CD8-positive, alpha-beta T cell (primary cell): ENCODE measurements at regions of chr2 and their contacts with region 1.

Region 1: GRCh38 chr2:203814661-203815540 is 52.7 kb upstream of the CTLA4 start:
- DNase-seq: peak; percentile 13 to 84 (median 50)
- ATAC-seq: peak; percentile 80
- H3K4me3 ChIP-seq: no peak overlapping the region
- H3K4me3 Mint-ChIP-seq: peak overlapping the region; percentile 79
- H3K27ac ChIP-seq: no peak overlapping the region
- H3K27ac Mint-ChIP-seq: no peak overlapping the region
- H3K4me1 ChIP-seq: peaks cover 23% of the 10 kb centered on the region
- H3K4me1 Mint-ChIP-seq: peaks cover 43% of the 10 kb centered on the region
- H3K27me3 ChIP-seq: no peaks in the 10 kb centered on the region
- H3K27me3 Mint-ChIP-seq: no peaks in the 10 kb centered on the region
- CTCF ChIP-seq: peak; percentile 79

Region 2: DNA sequence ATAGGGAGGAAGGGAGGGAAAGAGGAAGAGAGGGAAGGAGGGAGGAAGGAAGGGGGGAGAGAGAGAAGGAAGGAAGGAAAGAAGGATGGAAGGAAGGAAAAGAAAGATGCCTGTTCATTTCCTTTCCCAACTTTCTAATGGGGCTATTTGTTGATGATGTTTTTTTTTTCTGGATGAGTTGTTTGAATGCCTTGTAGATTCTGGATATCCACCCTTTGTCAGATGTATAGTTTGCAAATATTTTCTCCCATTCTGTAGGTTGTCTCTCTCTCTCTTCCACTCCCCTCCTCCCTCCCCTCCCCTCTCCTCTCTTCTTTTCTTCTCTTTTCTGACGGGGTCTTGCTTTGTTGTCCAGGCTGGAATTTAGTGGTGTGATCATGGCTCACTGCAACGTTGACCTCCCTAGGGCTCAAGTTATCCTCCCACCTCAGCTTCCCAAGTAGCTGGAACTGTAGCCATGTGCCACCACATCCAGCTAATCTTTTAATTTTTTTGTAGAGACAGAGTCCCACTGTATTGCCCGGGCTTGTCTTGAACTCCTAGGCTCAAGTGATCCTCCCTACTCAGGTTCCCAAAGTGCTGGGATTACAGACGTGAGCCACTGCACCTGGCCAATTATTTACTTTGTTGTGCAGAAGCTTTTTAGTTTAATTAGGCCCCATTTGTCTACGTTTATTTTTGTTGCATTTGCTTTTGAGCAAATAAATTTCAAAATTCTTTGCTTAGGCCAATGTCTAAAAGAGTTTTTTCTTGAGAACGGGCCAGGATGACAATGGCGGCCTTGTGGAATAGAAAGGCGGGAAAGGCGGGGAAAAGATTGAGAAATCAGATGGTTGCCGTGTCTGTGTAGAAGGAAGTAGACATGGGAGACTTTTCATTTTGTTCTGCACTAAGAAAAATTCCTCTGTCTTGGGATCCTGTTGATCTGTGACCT is 1237.4 kb before region 1 on chr2:
- CTCF ChIA-PET with region 1: no interaction called
- POLR2A ChIA-PET with region 1: no interaction called
- intact Hi-C with region 1: loop called in 1 of 2 experiments (anchors 5 kb)
- DNase-seq: no peak
- ATAC-seq: no peak
- H3K4me3 ChIP-seq: no peak overlapping the region
- H3K4me3 Mint-ChIP-seq: no peak overlapping the region
- H3K27ac ChIP-seq: no peak overlapping the region
- H3K27ac Mint-ChIP-seq: no peak overlapping the region
- H3K4me1 ChIP-seq: no peaks in the 10 kb centered on the region
- H3K4me1 Mint-ChIP-seq: no peaks in the 10 kb centered on the region
- H3K27me3 ChIP-seq: no peaks in the 10 kb centered on the region
- H3K27me3 Mint-ChIP-seq: no peaks in the 10 kb centered on the region
- CTCF ChIP-seq: no peak

Region 3: DNA sequence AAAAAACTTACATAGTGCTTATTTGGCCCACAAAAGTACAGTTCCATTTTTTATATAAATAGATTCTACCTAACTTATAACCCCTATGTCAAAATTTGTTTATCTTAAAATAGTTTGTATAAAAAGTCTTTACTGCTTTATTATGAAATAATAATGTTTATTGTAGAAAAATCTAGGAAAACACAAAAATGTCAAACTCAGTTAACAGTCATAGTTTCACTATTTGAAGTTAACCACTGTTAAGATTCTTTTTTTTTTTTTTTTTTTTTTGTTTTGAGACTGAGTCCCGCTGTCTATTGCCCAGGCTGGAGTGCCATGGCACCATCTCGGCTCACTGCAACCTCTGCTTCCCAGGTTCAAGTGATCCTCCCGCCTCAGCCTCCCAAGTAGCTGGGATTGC is 513.2 kb before region 1 on chr2:
- CTCF ChIA-PET with region 1: no interaction called
- POLR2A ChIA-PET with region 1: no interaction called
- intact Hi-C with region 1: loop called in 1 of 2 experiments (anchors 10 kb)
- DNase-seq: no peak
- ATAC-seq: no peak
- H3K4me3 ChIP-seq: no peak overlapping the region
- H3K4me3 Mint-ChIP-seq: no peak overlapping the region
- H3K27ac ChIP-seq: no peak overlapping the region
- H3K27ac Mint-ChIP-seq: no peak overlapping the region
- H3K4me1 ChIP-seq: no peaks in the 10 kb centered on the region
- H3K4me1 Mint-ChIP-seq: no peaks in the 10 kb centered on the region
- H3K27me3 ChIP-seq: no peaks in the 10 kb centered on the region
- H3K27me3 Mint-ChIP-seq: no peaks in the 10 kb centered on the region
- CTCF ChIP-seq: no peak

Region 4: DNA sequence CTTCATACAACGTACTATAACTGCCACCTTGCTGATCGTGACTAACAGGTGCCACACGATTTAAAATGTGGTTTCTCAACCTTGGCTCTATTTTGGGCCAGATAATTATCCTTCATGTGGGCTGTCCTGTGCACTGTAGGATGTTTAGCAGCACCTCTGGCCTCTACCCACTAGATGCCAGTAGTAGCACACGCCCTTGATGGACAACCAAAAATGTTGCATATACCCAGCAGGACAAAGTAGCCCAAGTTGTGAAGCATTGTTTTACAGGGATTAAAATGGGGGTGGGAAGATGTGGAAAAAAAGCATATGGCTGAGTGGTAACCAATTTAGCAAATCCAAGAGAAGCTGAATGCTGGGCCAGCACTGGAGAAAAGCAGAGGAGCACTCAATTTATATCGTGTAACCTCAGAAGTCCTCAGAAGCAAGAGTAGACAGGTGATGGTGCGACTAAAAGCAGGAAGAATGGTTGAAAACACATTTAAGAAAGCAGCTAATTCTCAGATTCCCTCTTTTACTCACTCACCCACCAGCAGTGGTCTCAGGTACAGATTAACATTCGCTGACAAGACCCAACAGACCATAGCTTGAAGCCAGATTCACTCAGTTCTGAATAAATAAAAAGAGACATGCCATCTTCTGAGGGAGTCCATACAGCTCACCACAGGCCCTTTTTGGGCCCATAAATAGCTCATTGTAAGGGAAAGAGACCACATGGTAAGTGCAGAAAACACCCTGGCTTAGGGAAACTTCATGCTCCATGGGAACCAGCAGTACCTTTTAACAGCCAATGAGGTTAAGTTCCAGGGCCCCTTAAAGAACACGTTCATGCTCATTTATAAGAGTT is 330.4 kb before region 1 on chr2:
- CTCF ChIA-PET with region 1: interaction called, 225 read pairs
- POLR2A ChIA-PET with region 1: interaction called, 8 read pairs
- intact Hi-C with region 1: loop called (anchors 1 kb)
- DNase-seq: peak; percentile 27 to 77 (median 48)
- ATAC-seq: peak; percentile 88
- H3K4me3 ChIP-seq: no peak overlapping the region
- H3K4me3 Mint-ChIP-seq: no peak overlapping the region
- H3K27ac ChIP-seq: no peak overlapping the region
- H3K27ac Mint-ChIP-seq: no peak overlapping the region
- H3K4me1 ChIP-seq: peaks cover 4% of the 10 kb centered on the region
- H3K4me1 Mint-ChIP-seq: peaks cover 7% of the 10 kb centered on the region
- H3K27me3 ChIP-seq: no peaks in the 10 kb centered on the region
- H3K27me3 Mint-ChIP-seq: no peaks in the 10 kb centered on the region
- CTCF ChIP-seq: peak; percentile 83

Region 5: DNA sequence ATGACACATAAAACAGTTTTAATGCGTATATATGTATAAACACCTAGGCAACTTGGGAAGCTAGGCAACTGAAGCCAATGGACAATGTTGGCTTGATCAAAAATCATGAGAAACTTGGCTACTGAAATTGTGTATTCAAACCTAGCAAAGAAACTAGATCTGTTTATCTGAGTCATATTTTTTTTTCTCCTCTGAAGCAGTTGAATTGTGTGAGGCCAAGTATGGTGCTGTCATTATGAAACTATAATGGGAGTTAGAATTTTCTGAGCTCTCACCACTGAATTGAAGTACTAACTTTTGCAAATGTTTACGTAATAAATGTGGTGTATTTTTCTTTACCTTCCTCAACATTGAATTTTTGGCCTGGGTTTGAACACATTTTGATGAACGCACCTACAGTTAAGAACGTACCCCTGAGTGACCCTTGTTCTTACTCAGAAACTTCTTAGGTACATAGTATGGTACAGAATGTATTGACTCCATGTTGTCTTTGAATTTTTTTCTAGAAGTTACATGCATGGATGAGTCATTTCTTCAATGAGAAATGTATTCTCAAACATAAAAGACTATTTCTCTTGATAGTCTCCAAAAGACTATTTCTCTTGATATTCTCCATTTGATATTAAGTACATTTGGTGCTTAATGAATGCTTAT is 84.7 kb before region 1 on chr2:
- CTCF ChIA-PET with region 1: interaction called, 14 read pairs
- POLR2A ChIA-PET with region 1: no interaction called
- intact Hi-C with region 1: no loop called
- DNase-seq: no peak
- ATAC-seq: peak; percentile 43
- H3K4me3 ChIP-seq: no peak overlapping the region
- H3K4me3 Mint-ChIP-seq: peak overlapping the region; percentile 42
- H3K27ac ChIP-seq: no peak overlapping the region
- H3K27ac Mint-ChIP-seq: peak overlapping the region; percentile 63
- H3K4me1 ChIP-seq: peaks cover 58% of the 10 kb centered on the region
- H3K4me1 Mint-ChIP-seq: peaks cover 88% of the 10 kb centered on the region
- H3K27me3 ChIP-seq: no peaks in the 10 kb centered on the region
- H3K27me3 Mint-ChIP-seq: no peaks in the 10 kb centered on the region
- CTCF ChIP-seq: no peak

Region 6: GRCh38 chr2:203804070-203804469 is 10.8 kb before region 1 on chr2:
- CTCF ChIA-PET with region 1: interaction called, 33 read pairs
- POLR2A ChIA-PET with region 1: no interaction called
- intact Hi-C with region 1: no loop called
- DNase-seq: peak in 5 of 9 experiments; percentile 12 to 70 (median 53)
- ATAC-seq: peak; percentile 64
- H3K4me3 ChIP-seq: no peak overlapping the region
- H3K4me3 Mint-ChIP-seq: peak overlapping the region; percentile 44
- H3K27ac ChIP-seq: peak overlapping the region in 1 of 2 experiments; percentile 18
- H3K27ac Mint-ChIP-seq: peak overlapping the region; percentile 20
- H3K4me1 ChIP-seq: peaks cover 29% of the 10 kb centered on the region
- H3K4me1 Mint-ChIP-seq: peaks cover 50% of the 10 kb centered on the region
- H3K27me3 ChIP-seq: no peaks in the 10 kb centered on the region
- H3K27me3 Mint-ChIP-seq: no peaks in the 10 kb centered on the region
- CTCF ChIP-seq: no peak

Region 7: DNA sequence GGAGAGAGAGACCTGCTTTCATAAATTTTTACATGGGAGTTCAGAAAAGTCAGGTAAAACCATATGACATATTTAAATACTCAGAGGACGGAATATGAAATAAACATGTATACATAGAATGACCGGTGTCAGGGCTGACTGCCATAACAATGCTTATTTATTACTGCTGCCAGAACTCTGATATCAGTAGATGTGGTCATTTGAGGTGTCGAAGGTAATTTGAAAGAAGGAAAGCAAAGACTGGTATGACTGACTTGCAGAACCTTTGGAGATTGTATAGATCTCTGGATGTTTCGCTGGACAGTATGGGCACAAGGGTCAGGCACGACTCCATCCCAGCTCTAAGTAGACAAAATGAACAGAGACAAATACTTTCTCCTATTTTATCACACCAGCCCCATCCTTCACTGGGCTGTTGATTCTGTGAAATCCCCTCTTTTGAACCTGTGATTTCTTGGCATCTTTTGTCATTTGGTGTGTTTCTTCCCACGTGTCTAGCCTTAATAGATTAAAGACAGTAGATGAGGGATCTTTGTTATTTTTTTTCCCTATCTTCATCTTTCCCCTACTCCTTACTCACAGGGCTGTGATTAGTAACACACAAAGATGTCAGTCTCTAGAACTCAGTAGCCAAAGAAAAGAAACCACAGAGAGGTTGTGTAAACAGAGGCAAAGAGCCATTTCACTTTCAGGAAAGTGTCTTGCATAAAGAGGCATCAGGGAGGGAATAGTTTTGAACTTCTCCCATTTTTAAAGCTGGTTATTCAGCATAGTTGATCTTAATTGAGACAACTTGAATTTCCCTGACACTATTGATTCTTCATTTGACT is 183.3 kb after region 1 on chr2:
- CTCF ChIA-PET with region 1: no interaction called
- POLR2A ChIA-PET with region 1: no interaction called
- intact Hi-C with region 1: no loop called
- DNase-seq: peak in 1 of 9 experiments; percentile 25
- ATAC-seq: no peak
- H3K4me3 ChIP-seq: no peak overlapping the region
- H3K4me3 Mint-ChIP-seq: no peak overlapping the region
- H3K27ac ChIP-seq: no peak overlapping the region
- H3K27ac Mint-ChIP-seq: no peak overlapping the region
- H3K4me1 ChIP-seq: peaks cover 25% of the 10 kb centered on the region
- H3K4me1 Mint-ChIP-seq: peaks cover 64% of the 10 kb centered on the region
- H3K27me3 ChIP-seq: no peaks in the 10 kb centered on the region
- H3K27me3 Mint-ChIP-seq: no peaks in the 10 kb centered on the region
- CTCF ChIP-seq: no peak

Region 8: GRCh38 chr2:204234879-204235278 is 420.0 kb after region 1 on chr2:
- CTCF ChIA-PET with region 1: no interaction called
- POLR2A ChIA-PET with region 1: no interaction called
- intact Hi-C with region 1: no loop called
- DNase-seq: no peak
- ATAC-seq: no peak
- H3K4me3 ChIP-seq: no peak overlapping the region
- H3K4me3 Mint-ChIP-seq: no peak overlapping the region
- H3K27ac ChIP-seq: no peak overlapping the region
- H3K27ac Mint-ChIP-seq: no peak overlapping the region
- H3K4me1 ChIP-seq: no peaks in the 10 kb centered on the region
- H3K4me1 Mint-ChIP-seq: no peaks in the 10 kb centered on the region
- H3K27me3 ChIP-seq: no peaks in the 10 kb centered on the region
- H3K27me3 Mint-ChIP-seq: peaks cover under 1% of the 10 kb centered on the region
- CTCF ChIP-seq: no peak